ENCODE measurements at regions of chr6 and their contacts with region 1.

Region 1: GRCh38 chr6:28136585-28137504 is 4.8 kb upstream of the ZKSCAN8 start:
- DNase-seq: peak; percentile 88 to 89 (median 88)
- ATAC-seq: peak; percentile 85
- H3K4me3 ChIP-seq: peak overlapping the region; percentile 43
- H3K4me1 ChIP-seq: peaks cover 10% of the 10 kb centered on the region
- CTCF ChIP-seq: no peak

Region 2: GRCh38 chr6:28090917-28091586 is 45.8 kb before region 1 on chr6:
- intact Hi-C with region 1: no loop called
- DNase-seq: no peak
- ATAC-seq: peak; percentile 27
- H3K4me3 ChIP-seq: no peak overlapping the region
- H3K4me1 ChIP-seq: no peaks in the 10 kb centered on the region
- CTCF ChIP-seq: no peak

Region 3: GRCh38 chr6:28212510-28213212 is 75.8 kb after region 1 on chr6:
- intact Hi-C with region 1: loop called in 1 of 2 experiments (anchors 5 kb)
- DNase-seq: peak; percentile 56 to 76 (median 76)
- ATAC-seq: peak; percentile 78
- H3K4me3 ChIP-seq: no peak overlapping the region
- H3K4me1 ChIP-seq: no peaks in the 10 kb centered on the region
- CTCF ChIP-seq: no peak

Region 4: DNA sequence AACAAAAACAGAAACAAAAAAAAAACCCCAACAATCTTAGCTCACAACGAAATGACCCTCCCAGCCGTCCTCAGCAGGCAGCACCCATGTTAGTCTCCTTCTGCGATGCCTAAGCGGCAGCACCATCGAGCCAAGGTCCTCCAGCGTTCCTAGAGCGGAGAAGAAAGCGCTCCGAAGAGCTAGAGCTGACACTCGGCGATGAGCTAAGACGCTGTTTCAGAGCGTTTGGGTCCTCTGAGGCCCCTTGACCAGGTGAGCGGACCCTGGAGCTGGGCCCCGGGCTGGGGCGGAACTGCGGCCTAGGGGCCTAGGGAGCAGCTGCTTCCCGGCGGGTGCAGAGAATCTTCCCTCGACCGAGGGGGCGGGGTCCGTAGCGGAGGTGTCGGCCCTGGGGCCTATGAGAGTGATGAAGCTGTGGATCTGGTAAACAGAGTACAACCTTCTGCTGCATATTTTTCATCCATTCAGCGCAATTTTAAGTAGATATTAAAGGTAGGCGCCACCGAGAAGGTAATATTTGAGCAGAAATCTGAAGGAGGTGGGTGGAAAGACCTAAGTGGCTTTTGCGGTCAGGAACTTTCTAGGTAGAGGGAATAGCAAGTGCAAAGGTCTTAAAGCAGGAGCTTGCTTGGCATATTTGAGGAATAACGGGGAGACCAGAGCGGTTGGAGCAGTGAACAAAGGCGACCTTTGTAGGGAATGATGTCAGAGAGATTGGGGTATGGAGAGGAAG is 130.3 kb after region 1 on chr6 and contains the start of gene ZSCAN26:
- intact Hi-C with region 1: no loop called
- DNase-seq: peak; percentile 86 to 93 (median 92)
- ATAC-seq: peak; percentile 99
- H3K4me3 ChIP-seq: peak within 1 kb of the TSS; percentile 50
- H3K4me1 ChIP-seq: peaks cover 9% of the 10 kb centered on the region
- CTCF ChIP-seq: no peak
- total RNA-seq, gene ZSCAN26: 8.2 to 17.7 (median 9.2) TPM

Region 5: GRCh38 chr6:28355743-28356665 is 219.2 kb after region 1 on chr6:
- intact Hi-C with region 1: loop called (anchors 10 kb)
- DNase-seq: peak; percentile 73 to 97 (median 76)
- ATAC-seq: peak; percentile 93
- H3K4me3 ChIP-seq: peak overlapping the region; percentile 29
- H3K4me1 ChIP-seq: peaks cover 19% of the 10 kb centered on the region
- CTCF ChIP-seq: peak; percentile 62

Measured in mucosa of descending colon (tissue), 3 donors.